Heart right ventricle (tissue), 16 donors: ENCODE measurements at regions of chr10 and their contacts with region 1.

Region 1: GRCh38 chr10:18472977-18473376 is 178.4 kb downstream of the NSUN6 start:
- DNase-seq: no peak
- ATAC-seq: peak in 6 of 8 donors; percentile 21 to 65 (median 40)
- H3K4me3 ChIP-seq: peak overlapping the region in 2 of 10 donors; percentile 3 to 12
- H3K27ac ChIP-seq: peak overlapping the region; percentile 72 to 92 (median 82)
- H3K4me1 ChIP-seq: peaks cover 0 to 37% (median 14%) of the 10 kb centered on the region in 9 donors
- H3K27me3 ChIP-seq: no peaks in the 10 kb centered on the region
- CTCF ChIP-seq: peak in 3 of 9 donors; percentile 23 to 46 (median 35)

Region 2: DNA sequence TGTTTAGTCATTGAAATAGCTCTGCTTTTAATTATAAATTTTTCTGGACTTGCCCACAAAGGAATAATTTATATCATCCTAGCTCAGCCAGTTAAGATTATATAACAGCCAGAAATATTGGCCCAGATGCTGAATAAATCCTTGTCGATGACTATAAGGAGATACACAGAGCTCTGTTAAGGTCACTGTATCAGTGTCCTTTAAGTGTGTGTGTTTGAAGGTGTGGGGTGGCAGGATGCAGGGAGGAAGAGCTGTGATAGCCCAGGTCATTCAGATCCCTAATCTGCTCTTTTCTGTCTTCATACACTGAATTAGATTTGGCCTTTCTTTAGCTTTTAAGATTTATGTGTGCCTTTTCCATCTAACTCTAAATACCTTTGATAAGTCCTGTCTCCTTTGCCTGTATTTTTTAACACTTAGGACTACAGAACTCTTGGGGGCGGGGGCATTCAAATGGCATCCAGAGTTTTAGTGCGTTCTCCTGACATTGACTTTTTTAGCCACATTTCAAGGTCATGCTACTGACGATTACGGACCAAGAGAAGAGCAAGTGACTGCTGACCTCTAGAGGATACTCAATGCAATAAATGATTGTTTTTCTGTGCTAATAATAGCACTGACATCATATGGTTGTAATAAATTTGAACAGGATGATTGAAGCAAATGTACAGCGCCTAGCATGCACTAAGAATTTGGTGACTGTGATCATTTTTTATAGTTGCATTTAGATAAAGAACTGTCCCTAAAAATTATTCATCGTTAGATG is 160.4 kb before region 1 on chr10:
- intact Hi-C with region 1: loop called in 1 of 10 experiments (anchors 10 kb)
- DNase-seq: peak in 1 of 2 donors; percentile 29
- ATAC-seq: peak; percentile 68 to 84 (median 80)
- H3K4me3 ChIP-seq: peak overlapping the region in 1 of 10 donors; percentile 6
- H3K27ac ChIP-seq: peak overlapping the region; percentile 6 to 88 (median 84)
- H3K4me1 ChIP-seq: peaks cover 0 to 38% (median 8%) of the 10 kb centered on the region in 9 donors
- H3K27me3 ChIP-seq: no peaks in the 10 kb centered on the region
- CTCF ChIP-seq: peak in 7 of 9 donors; percentile 40 to 65 (median 53)

Region 3: GRCh38 chr10:18340496-18341051 is 132.4 kb before region 1 on chr10:
- intact Hi-C with region 1: loop called in 4 of 10 experiments (anchors 5 to 10 kb)
- DNase-seq: peak; percentile 29 to 37
- ATAC-seq: peak; percentile 53 to 95 (median 88)
- H3K4me3 ChIP-seq: peak overlapping the region in 9 of 10 donors; percentile 38 to 67 (median 54)
- H3K27ac ChIP-seq: peak overlapping the region; percentile 64 to 87 (median 79)
- H3K4me1 ChIP-seq: peaks cover 0 to 5% (median 0%) of the 10 kb centered on the region in 9 donors
- H3K27me3 ChIP-seq: no peaks in the 10 kb centered on the region
- CTCF ChIP-seq: no peak

Region 4: GRCh38 chr10:18378766-18379165 is 94.2 kb before region 1 on chr10:
- intact Hi-C with region 1: no loop called
- DNase-seq: peak; percentile 25 to 28
- ATAC-seq: peak in 5 of 8 donors; percentile 52 to 83 (median 69)
- H3K4me3 ChIP-seq: no peak overlapping the region
- H3K27ac ChIP-seq: peak overlapping the region in 4 of 10 donors; percentile 3 to 33 (median 19)
- H3K4me1 ChIP-seq: peaks cover 0 to 28% (median 8%) of the 10 kb centered on the region in 9 donors
- H3K27me3 ChIP-seq: no peaks in the 10 kb centered on the region
- CTCF ChIP-seq: no peak

Region 5: DNA sequence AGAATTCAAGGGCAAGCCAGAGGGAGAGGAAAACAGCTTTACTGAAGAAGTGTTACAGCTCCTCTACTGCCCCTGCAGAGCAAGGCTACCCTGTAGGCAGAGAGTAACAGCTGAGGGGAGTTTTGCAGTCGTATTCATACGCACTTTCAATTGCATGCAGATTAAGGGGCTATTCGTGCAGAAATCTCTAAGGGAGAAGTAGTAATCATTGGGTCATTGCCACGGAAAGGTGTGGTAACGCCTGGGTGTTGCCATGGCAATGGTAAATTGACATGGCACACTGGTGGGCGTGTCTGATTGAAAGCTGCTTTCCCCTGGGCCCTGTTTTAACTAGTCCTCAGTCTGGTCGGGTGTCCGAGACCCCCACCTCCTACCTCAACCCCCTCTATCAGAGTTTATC is 48.8 kb before region 1 on chr10:
- intact Hi-C with region 1: loop called in 1 of 10 experiments (anchors 5 kb)
- DNase-seq: no peak
- ATAC-seq: peak in 3 of 8 donors; percentile 25 to 55 (median 28)
- H3K4me3 ChIP-seq: no peak overlapping the region
- H3K27ac ChIP-seq: peak overlapping the region in 2 of 10 donors; percentile 31 to 61
- H3K4me1 ChIP-seq: peaks cover 0 to 18% (median 4%) of the 10 kb centered on the region in 9 donors
- H3K27me3 ChIP-seq: no peaks in the 10 kb centered on the region
- CTCF ChIP-seq: no peak